ENCODE measurements at regions of chr19 and their contacts with region 1.

Region 1: GRCh38 chr19:49896863-49897621 is at the start of gene IL4I1:
- DNase-seq: peak; percentile 76
- ATAC-seq: peak; percentile 72
- H3K4me3 Mint-ChIP-seq: peak within 1 kb of the TSS; percentile 87
- H3K27ac Mint-ChIP-seq: peak within 1 kb of the TSS; percentile 99
- H3K4me1 Mint-ChIP-seq: peaks cover 67% of the 10 kb centered on the region
- H3K27me3 Mint-ChIP-seq: no peaks in the 10 kb centered on the region
- CTCF ChIP-seq: no peak
- total RNA-seq, gene IL4I1: 24.0 and 25.5 TPM in 2 replicates

Region 2: GRCh38 chr19:49843265-49843664 is 53.8 kb before region 1 on chr19:
- CTCF ChIA-PET with region 1: no interaction called
- POLR2A ChIA-PET with region 1: interaction called, 20 read pairs
- intact Hi-C with region 1: no loop called
- DNase-seq: no peak
- ATAC-seq: peak; percentile 97
- H3K4me3 Mint-ChIP-seq: peak overlapping the region; percentile 68
- H3K27ac Mint-ChIP-seq: peak overlapping the region; percentile 82
- H3K4me1 Mint-ChIP-seq: peaks cover 45% of the 10 kb centered on the region
- H3K27me3 Mint-ChIP-seq: no peaks in the 10 kb centered on the region
- CTCF ChIP-seq: no peak

Region 3: DNA sequence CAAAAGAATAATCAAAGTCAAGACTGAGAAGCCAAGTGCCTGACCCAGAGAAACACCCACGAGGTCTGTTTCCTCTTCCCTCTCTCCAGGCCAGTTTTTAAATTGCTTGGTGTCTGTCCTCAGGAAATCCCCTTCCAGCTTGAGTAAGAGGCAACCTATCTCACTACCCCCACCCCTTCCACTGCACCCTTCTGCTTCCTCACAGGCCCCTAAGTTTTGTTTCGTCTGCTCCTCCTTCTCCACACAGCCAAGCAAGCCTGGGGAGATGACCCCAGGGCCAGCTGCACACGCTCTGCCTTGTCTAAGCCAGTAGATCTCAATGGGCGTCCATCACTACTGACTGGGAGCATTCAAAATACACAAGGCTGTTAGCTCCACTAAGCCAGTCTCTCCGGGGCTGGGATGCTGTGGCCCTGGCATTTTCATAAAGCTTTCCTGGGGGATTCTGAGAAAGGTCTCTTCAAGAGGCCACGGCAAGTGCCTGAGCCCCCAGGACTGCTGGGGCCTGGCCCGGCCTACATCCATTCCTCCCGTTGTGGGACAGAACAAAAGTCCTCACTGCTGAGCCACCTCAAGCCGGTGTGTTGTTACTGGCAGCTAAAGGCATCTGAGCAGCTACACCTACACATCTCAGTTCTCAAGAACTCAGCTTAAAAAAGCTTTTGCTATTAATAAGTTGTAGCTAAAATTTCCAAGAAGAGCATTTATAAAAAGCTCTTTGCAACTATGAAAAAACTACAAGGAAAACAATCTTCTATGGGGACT is 14.5 kb after region 1 on chr19:
- CTCF ChIA-PET with region 1: interaction called, 3 read pairs
- POLR2A ChIA-PET with region 1: interaction called, 317 read pairs
- intact Hi-C with region 1: loop called (anchors 1 kb)
- DNase-seq: no peak
- ATAC-seq: peak; percentile 80
- H3K4me3 Mint-ChIP-seq: peak overlapping the region; percentile 68
- H3K27ac Mint-ChIP-seq: peak overlapping the region; percentile 89
- H3K4me1 Mint-ChIP-seq: peaks cover 76% of the 10 kb centered on the region
- H3K27me3 Mint-ChIP-seq: no peaks in the 10 kb centered on the region
- CTCF ChIP-seq: no peak

Region 4: GRCh38 chr19:49916842-49917733 is 20.0 kb after region 1 on chr19:
- CTCF ChIA-PET with region 1: interaction called, 4 read pairs
- POLR2A ChIA-PET with region 1: interaction called, 317 read pairs
- intact Hi-C with region 1: loop called (anchors 1 kb)
- DNase-seq: peak; percentile 41
- ATAC-seq: peak; percentile 74
- H3K4me3 Mint-ChIP-seq: peak overlapping the region; percentile 77
- H3K27ac Mint-ChIP-seq: peak overlapping the region; percentile 94
- H3K4me1 Mint-ChIP-seq: peaks cover 77% of the 10 kb centered on the region
- H3K27me3 Mint-ChIP-seq: no peaks in the 10 kb centered on the region
- CTCF ChIP-seq: no peak

Region 5: GRCh38 chr19:49921871-49922795 is 25.1 kb after region 1 on chr19:
- CTCF ChIA-PET with region 1: interaction called, 4 read pairs
- POLR2A ChIA-PET with region 1: interaction called, 317 read pairs
- intact Hi-C with region 1: loop called (anchors 1 kb)
- DNase-seq: no peak
- ATAC-seq: no peak
- H3K4me3 Mint-ChIP-seq: no peak overlapping the region
- H3K27ac Mint-ChIP-seq: peak overlapping the region; percentile 88
- H3K4me1 Mint-ChIP-seq: peaks cover 77% of the 10 kb centered on the region
- H3K27me3 Mint-ChIP-seq: no peaks in the 10 kb centered on the region
- CTCF ChIP-seq: no peak

Region 6: DNA sequence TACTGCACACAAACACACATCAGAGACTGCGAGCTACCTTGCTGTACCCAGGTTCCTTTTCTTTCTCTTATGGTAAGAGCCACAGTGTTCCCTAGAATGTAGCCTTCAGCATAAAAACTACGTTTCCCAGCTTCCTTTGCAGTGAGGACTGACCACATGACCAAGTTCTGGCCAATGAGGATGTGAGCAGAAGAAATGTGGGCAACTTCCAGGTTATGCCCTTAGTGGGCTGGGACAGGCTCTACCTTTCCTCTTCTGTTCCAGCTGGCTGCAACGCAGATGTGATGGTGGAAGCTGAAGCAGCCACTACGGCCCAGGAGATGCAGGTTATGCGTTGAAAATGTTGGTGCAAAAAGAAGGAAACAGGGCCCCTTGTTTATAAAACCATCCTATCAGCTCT is 100.7 kb after region 1 on chr19:
- CTCF ChIA-PET with region 1: no interaction called
- POLR2A ChIA-PET with region 1: interaction called, 19 read pairs
- intact Hi-C with region 1: no loop called
- DNase-seq: no peak
- ATAC-seq: peak; percentile 58
- H3K4me3 Mint-ChIP-seq: no peak overlapping the region
- H3K27ac Mint-ChIP-seq: no peak overlapping the region
- H3K4me1 Mint-ChIP-seq: no peaks in the 10 kb centered on the region
- H3K27me3 Mint-ChIP-seq: no peaks in the 10 kb centered on the region
- CTCF ChIP-seq: no peak